H1 (cell line): ENCODE measurements at regions of chr20 and their contacts with region 1.

Region 1: DNA sequence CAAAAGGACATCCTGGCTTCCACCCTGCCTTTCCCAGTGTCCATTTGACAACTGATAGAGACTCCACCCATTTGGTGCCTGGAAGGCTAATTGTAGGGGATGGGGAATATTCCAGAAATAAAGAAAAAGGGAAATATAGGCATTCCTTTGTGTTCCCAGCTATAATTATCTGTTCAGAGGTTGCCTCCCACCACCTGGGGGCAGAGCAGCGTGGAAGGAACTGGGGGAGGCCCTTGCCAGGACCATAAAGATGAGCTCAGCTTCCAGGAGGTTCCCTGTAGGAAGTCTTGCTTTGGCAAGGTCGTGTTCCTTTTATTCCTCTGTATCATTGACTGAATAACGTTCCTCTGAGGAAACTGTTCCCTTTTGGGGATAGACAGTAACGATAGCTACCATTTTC is 214.7 kb downstream of the TFAP2C start:
- DNase-seq: no peak
- H3K4me3 ChIP-seq: no peak overlapping the region
- H3K27ac ChIP-seq: no peak overlapping the region
- H3K4me1 ChIP-seq: peaks cover 0 to 5% (median 0%) of the 10 kb centered on the region in 4 experiments; a peak in 3 of 7 replicates
- H3K27me3 ChIP-seq: no peaks in the 10 kb centered on the region; a peak in 4 of 7 replicates
- CTCF ChIP-seq: peak; percentile 45 to 62 (median 59)
- EP300 ChIP-seq: no peak
- POLR2A ChIP-seq: no peak
- RAD21 ChIP-seq: peak; percentile 60 to 72

Region 2: DNA sequence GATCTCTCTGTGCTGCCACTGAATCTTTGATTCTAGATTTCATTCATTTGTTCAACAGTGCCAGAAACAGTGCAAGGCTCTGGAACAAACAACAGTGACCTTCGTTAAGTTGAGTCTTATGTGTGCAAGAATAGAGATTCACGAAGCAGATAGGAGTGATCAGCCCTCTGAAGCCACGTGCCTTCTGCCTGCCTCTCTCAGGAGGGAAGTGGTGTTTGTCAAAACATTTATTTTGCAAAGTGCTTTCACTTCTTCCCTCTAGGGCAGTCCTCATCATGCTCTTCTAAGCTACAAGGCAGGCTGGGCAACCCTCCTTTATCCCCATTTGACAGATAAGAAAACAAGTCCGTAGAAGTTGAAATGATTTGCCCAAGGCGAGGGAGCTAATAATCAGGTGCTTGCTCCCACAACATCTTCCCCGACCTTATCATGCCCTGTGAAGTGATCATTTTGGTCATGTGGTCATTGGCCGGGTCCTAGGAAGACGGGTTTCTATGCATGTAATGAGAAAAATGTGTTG is 10.3 kb before region 1 on chr20:
- CTCF ChIA-PET with region 1: interaction called, 12 read pairs
- POLR2A ChIA-PET with region 1: no interaction called
- DNase-seq: no peak
- H3K4me3 ChIP-seq: no peak overlapping the region
- H3K27ac ChIP-seq: no peak overlapping the region
- H3K4me1 ChIP-seq: peaks cover 0 to 11% (median 7%) of the 10 kb centered on the region in 4 experiments; a peak in 5 of 7 replicates
- H3K27me3 ChIP-seq: no peaks in the 10 kb centered on the region
- CTCF ChIP-seq: no peak
- EP300 ChIP-seq: no peak
- POLR2A ChIP-seq: no peak
- RAD21 ChIP-seq: no peak

Region 3: GRCh38 chr20:56859801-56860261 is 16.0 kb after region 1 on chr20:
- CTCF ChIA-PET with region 1: interaction called, 25 read pairs
- POLR2A ChIA-PET with region 1: no interaction called
- DNase-seq: peak in 1 of 2 experiments; percentile 56
- H3K4me3 ChIP-seq: peak overlapping the region in 3 of 4 experiments; percentile 13 to 46 (median 23); a peak in 4 of 8 replicates
- H3K27ac ChIP-seq: no peak overlapping the region
- H3K4me1 ChIP-seq: peaks cover 0 to 23% (median 17%) of the 10 kb centered on the region in 4 experiments; a peak in 5 of 7 replicates
- H3K27me3 ChIP-seq: peaks cover 0 to 12% (median 0%) of the 10 kb centered on the region in 4 experiments; a peak in 4 of 7 replicates
- CTCF ChIP-seq: no peak
- EP300 ChIP-seq: no peak
- POLR2A ChIP-seq: 0 out of 3 replicates have a peak, but pooled peaks of 1 of the 2 experiments have one; percentile 20
- RAD21 ChIP-seq: no peak

Region 4: GRCh38 chr20:56867132-56867531 is 23.3 kb after region 1 on chr20:
- CTCF ChIA-PET with region 1: interaction called, 10 read pairs
- POLR2A ChIA-PET with region 1: no interaction called
- DNase-seq: no peak
- H3K4me3 ChIP-seq: no peak overlapping the region
- H3K27ac ChIP-seq: no peak overlapping the region
- H3K4me1 ChIP-seq: peaks cover 0 to under 1% (median 0%) of the 10 kb centered on the region in 4 experiments; a peak in 1 of 7 replicates
- H3K27me3 ChIP-seq: no peaks in the 10 kb centered on the region; a peak in 1 of 7 replicates
- CTCF ChIP-seq: peak; percentile 15 to 53 (median 24)
- EP300 ChIP-seq: no peak
- POLR2A ChIP-seq: no peak
- RAD21 ChIP-seq: no peak; a peak in 1 of 4 replicates